Activated CD4-positive, alpha-beta memory T cell treated with anti-CD3 and anti-CD28 coated beads for 36 hours (primary cell): ENCODE measurements at regions of chr3 and their contacts with region 1.

Region 1: DNA sequence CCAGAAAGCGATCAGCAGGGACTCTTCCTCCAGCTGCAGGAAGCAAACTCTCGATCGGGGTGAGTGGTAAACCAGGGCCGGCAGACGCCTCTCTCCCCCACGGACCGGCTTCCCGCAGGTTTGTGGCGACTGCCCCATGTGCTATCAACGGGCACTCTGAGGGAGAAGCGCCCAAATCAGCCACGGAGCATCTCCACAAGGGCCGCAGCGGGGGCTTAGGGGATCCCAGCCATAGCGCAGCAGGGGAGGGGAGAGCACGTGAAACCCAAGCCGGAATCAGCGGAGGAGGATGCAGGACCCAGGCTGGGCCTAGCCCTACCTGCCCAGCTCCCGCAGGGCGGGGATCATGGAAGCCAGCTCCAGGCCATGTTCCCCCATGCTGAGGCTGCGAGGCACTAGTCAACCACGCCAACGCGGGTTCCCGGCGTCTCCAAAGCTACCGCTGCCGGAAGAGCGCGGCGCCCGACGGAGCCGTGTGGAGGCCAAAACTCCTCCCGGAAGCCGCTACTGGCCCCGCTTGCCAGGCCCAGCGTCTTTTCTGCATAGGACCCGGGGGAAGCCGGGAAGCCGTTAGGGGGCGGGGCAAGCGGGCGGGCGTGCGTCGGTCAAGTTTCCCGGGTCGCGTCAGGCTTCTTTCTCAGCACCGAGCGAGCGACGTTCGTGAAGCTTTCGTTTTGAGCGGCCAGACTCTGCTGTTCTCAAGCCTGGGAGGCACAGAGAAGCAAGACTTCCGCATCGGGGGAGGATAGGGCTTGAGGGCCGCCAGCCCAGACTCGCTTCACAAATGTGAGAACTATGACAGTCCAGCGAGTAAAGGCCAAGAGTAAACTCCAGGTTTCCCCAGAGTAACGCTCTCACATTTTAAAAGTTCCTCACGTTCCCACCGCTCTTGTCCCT is at the start of gene ATR:
- DNase-seq: peak; percentile 98
- H3K4me3 Mint-ChIP-seq: peak within 1 kb of the TSS; percentile 98
- H3K27ac Mint-ChIP-seq: peak within 1 kb of the TSS; percentile 94
- H3K4me1 Mint-ChIP-seq: peaks cover 43% of the 10 kb centered on the region
- H3K27me3 Mint-ChIP-seq: no peaks in the 10 kb centered on the region
- total RNA-seq, gene ATR: 41.6 to 42.3 TPM

Region 2: GRCh38 chr3:140941434-140942220 is 1636.9 kb before region 1 on chr3 and contains the start of gene SLC25A36:
- CTCF ChIA-PET with region 1: no interaction called
- POLR2A ChIA-PET with region 1: no interaction called
- intact Hi-C with region 1: loop called (anchors 5 kb)
- DNase-seq: peak; percentile 98
- H3K4me3 Mint-ChIP-seq: peak within 1 kb of the TSS; percentile 92
- H3K27ac Mint-ChIP-seq: peak within 1 kb of the TSS; percentile 83
- H3K4me1 Mint-ChIP-seq: peaks cover 37% of the 10 kb centered on the region
- H3K27me3 Mint-ChIP-seq: no peaks in the 10 kb centered on the region
- total RNA-seq, gene SLC25A36: 44.7 to 56.5 TPM

Region 3: DNA sequence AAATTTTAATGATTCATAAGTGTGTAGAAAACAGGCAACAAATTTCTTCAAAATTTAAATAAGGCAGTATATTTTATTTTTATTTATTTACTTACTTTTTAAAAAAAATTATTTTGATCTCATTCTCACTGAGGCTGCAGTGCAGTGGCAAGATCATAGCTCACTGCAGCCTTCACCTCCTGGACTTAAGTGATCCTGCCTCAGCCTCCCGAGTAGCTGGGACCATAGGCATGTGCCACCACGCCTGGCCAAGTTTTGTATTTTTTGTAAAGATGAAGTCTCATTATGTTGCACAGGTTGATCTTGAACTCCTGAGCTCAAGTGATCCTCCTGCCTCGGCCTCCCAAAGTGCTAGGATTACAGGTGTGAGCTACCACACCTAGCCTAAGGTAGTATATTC is 69.5 kb before region 1 on chr3:
- CTCF ChIA-PET with region 1: no interaction called
- POLR2A ChIA-PET with region 1: no interaction called
- intact Hi-C with region 1: loop called (anchors 5 kb)
- DNase-seq: peak; percentile 13
- H3K4me3 Mint-ChIP-seq: peak overlapping the region; percentile 69
- H3K27ac Mint-ChIP-seq: peak overlapping the region; percentile 85
- H3K4me1 Mint-ChIP-seq: peaks cover 10% of the 10 kb centered on the region
- H3K27me3 Mint-ChIP-seq: no peaks in the 10 kb centered on the region

Region 4: GRCh38 chr3:142723968-142724681 is 145.6 kb after region 1 on chr3 and contains the start of gene TRPC1:
- CTCF ChIA-PET with region 1: interaction called, 3 read pairs
- POLR2A ChIA-PET with region 1: interaction called, 6 read pairs
- intact Hi-C with region 1: loop called (anchors 5 kb)
- DNase-seq: peak; percentile 87
- H3K4me3 Mint-ChIP-seq: peak within 1 kb of the TSS; percentile 85
- H3K27ac Mint-ChIP-seq: peak within 1 kb of the TSS; percentile 82
- H3K4me1 Mint-ChIP-seq: peaks cover 14% of the 10 kb centered on the region
- H3K27me3 Mint-ChIP-seq: peaks cover 15% of the 10 kb centered on the region
- total RNA-seq, gene TRPC1: 2.8 to 3.8 TPM

Region 5: GRCh38 chr3:142866841-142867631 is 288.5 kb after region 1 on chr3:
- CTCF ChIA-PET with region 1: no interaction called
- POLR2A ChIA-PET with region 1: no interaction called
- intact Hi-C with region 1: no loop called
- DNase-seq: no peak
- H3K4me3 Mint-ChIP-seq: no peak overlapping the region
- H3K27ac Mint-ChIP-seq: no peak overlapping the region
- H3K4me1 Mint-ChIP-seq: peaks cover 5% of the 10 kb centered on the region
- H3K27me3 Mint-ChIP-seq: peaks cover 7% of the 10 kb centered on the region

Region 6: GRCh38 chr3:143084856-143085731 is 506.5 kb after region 1 on chr3:
- CTCF ChIA-PET with region 1: no interaction called
- POLR2A ChIA-PET with region 1: no interaction called
- intact Hi-C with region 1: loop called (anchors 1 kb)
- DNase-seq: peak; percentile 36
- H3K4me3 Mint-ChIP-seq: peak overlapping the region; percentile 40
- H3K27ac Mint-ChIP-seq: no peak overlapping the region
- H3K4me1 Mint-ChIP-seq: peaks cover 34% of the 10 kb centered on the region
- H3K27me3 Mint-ChIP-seq: peaks cover 6% of the 10 kb centered on the region